Cardiac septum (tissue), 1 donor: ENCODE measurements at regions of chr6 and their contacts with region 1.

Region 1: GRCh38 chr6:85482905-85483700 is 33.2 kb downstream of the NT5E start:
- DNase-seq: peak; percentile 88

Region 2: DNA sequence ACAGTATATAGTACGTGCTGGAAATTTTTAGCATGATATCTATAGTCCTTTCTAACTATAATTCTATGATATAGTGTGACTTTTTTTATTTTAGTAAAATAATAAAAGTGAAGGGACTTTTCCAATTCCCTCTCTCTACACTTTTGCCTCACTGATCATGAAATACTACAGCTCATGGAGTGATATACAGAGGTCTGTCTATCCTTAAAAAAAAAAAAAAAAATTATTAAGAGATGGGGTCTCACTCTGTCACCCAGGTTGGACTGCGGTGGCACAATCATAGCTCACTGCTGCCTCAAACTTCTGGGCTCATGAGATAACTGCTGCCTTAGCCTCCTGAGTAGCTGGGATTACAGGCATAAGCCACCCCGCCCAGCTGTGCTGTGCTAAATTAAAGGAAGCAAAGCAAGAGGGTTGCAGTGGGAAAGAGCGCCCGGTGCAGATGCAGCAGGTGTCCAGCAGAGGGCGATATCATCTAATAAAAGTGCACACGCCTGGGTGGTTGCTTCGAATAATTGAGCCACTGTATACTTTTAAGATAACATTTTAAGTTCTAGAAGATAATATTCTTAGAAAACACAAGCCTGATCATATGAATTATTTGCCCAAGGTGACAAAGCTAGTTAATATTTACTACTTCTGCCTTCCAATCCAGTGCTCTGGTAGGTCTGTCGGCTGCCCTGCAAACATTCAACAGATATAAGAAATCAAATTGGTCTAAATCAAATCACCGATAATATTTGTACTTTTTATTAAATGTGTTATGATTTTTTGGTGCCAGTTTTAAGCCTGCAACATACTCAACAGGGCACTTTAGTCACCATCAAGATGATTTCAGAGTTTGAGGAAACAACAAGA is 128.1 kb before region 1 on chr6:
- intact Hi-C with region 1: loop called (anchors 1 kb)
- DNase-seq: no peak

Region 3: DNA sequence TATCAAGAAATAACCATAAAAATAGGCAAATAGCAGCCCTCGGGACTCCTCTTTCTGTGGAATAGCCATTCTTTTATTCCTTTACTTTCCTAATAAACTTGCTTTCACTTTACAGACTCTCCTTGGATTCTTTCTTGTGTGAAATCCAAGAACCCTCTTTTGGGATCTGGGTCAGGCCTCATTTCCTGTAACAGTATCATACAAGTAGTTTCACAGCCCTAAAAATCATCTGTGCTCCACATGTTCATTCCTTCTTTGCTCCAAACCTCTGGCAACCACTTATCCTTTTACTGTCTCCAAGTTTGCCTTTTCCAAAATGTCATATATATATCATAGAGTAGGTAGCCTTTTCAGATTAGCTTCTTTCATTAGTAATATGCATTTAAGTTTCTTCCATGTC is 46.7 kb before region 1 on chr6:
- intact Hi-C with region 1: no loop called
- DNase-seq: no peak

Region 4: DNA sequence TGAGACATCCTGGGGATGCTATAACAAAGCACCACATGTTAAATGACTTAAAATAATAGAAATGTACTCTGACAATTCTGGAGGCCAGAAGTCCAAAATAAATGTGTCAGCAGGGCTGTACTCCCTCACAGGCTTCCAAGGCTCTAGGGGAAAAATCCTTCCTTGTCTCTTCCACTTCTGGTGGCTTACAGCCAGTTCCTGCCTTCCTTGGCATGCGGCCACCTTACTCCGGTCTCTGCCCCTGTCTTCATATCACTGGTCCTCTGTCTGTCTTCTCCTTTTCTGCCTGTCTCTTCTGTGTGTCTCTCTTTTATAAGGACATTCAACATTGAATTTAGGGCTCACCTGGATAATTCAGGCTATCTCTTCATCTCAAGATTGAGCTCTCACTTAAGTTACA is 314.9 kb after region 1 on chr6:
- intact Hi-C with region 1: no loop called
- DNase-seq: no peak